SK-N-SH (cell line): ENCODE measurements at regions of chr5 and their contacts with region 1.

Region 1: GRCh38 chr5:132205385-132206125 is 22.1 kb downstream of the P4HA2 start:
- DNase-seq: no peak
- H3K4me3 ChIP-seq: no peak overlapping the region
- H3K27ac ChIP-seq: no peak overlapping the region; a peak in 1 of 4 replicates
- H3K4me1 ChIP-seq: peaks cover 0 to 9% of the 10 kb centered on the region in 2 experiments; a peak in 1 of 4 replicates
- H3K27me3 ChIP-seq: no peaks in the 10 kb centered on the region
- CTCF ChIP-seq: no peak
- EP300 ChIP-seq: no peak
- RAD21 ChIP-seq: no peak

Region 2: DNA sequence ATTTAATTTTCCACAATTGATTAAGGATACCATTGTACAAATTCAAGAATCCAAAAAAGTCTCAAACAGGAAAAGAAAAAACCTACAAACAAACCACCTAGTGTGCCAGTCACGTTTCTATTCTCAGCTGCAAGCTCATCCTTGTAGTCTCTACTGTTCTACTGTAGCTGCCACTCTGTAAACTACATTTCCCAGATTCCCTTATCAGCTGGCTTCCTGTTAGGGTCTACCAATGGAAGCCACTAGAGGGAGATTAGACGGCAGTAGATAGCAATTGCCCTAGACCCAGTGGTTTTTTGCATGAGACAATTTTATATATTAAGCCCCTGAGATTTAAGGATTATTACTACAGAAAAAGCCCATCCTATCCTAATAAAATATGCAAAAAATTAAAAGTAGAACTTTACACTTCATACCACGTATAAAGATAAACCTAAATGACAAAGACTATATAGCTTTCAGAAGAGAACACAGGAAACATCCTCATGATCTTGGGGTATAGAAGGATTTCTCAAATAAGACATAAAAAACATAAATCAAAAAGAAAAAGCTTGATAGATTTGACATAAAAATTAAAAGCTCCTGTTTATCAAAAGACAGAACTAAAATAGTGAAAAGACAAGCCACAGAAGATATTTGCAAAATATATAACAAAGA is 15.3 kb before region 1 on chr5:
- CTCF ChIA-PET with region 1: interaction called, 27 read pairs
- POLR2A ChIA-PET with region 1: interaction called, 3 read pairs
- DNase-seq: peak; percentile 87
- H3K4me3 ChIP-seq: peak overlapping the region in 1 of 2 experiments; percentile 12; a peak in 2 of 4 replicates
- H3K27ac ChIP-seq: no peak overlapping the region; a peak in 1 of 4 replicates
- H3K4me1 ChIP-seq: no peaks in the 10 kb centered on the region; a peak in 1 of 4 replicates
- H3K27me3 ChIP-seq: no peaks in the 10 kb centered on the region
- CTCF ChIP-seq: peak; percentile 87
- EP300 ChIP-seq: no peak
- RAD21 ChIP-seq: peak; percentile 68